ENCODE measurements at regions of chr3 and their contacts with region 1.

Region 1: GRCh38 chr3:141231101-141231935 is at the start of gene PXYLP1:
- DNase-seq: peak; percentile 78 to 98 (median 94)

Region 2: GRCh38 chr3:140941434-140942220 is 289.7 kb before region 1 on chr3 and contains the start of gene SLC25A36:
- intact Hi-C with region 1: loop called (anchors 5 kb)
- DNase-seq: peak; percentile 95 to 99 (median 97)

Region 3: GRCh38 chr3:141279077-141279967 is 48.0 kb after region 1 on chr3:
- intact Hi-C with region 1: loop called (anchors 5 kb)
- DNase-seq: peak in 6 of 42 donors; percentile 6 to 56 (median 38)

Region 4: GRCh38 chr3:141353652-141354495 is 122.6 kb after region 1 on chr3:
- intact Hi-C with region 1: no loop called
- DNase-seq: no peak